Activated B cell treated with CpG ODN at 0.5 μM for 24 hours (primary cell): ENCODE measurements at regions of chr4 and their contacts with region 1.

Region 1: GRCh38 chr4:82428969-82429727 is 1.1 kb downstream of the HNRNPDL start:
- DNase-seq: peak; percentile 97
- ATAC-seq: peak; percentile 59
- H3K4me3 Mint-ChIP-seq: peak overlapping the region; percentile 100
- H3K27ac Mint-ChIP-seq: peak overlapping the region; percentile 99
- H3K4me1 Mint-ChIP-seq: peaks cover 58% of the 10 kb centered on the region
- H3K27me3 Mint-ChIP-seq: no peaks in the 10 kb centered on the region
- CTCF ChIP-seq: peak; percentile 68

Region 2: GRCh38 chr4:81421346-81422218 is 1007.6 kb before region 1 on chr4:
- CTCF ChIA-PET with region 1: no interaction called
- POLR2A ChIA-PET with region 1: interaction called, 5 read pairs
- intact Hi-C with region 1: loop called (anchors 1 kb)
- DNase-seq: no peak
- ATAC-seq: peak; percentile 99
- H3K4me3 Mint-ChIP-seq: peak overlapping the region; percentile 38
- H3K27ac Mint-ChIP-seq: peak overlapping the region; percentile 83
- H3K4me1 Mint-ChIP-seq: peaks cover 49% of the 10 kb centered on the region
- H3K27me3 Mint-ChIP-seq: no peaks in the 10 kb centered on the region
- CTCF ChIP-seq: no peak

Region 3: DNA sequence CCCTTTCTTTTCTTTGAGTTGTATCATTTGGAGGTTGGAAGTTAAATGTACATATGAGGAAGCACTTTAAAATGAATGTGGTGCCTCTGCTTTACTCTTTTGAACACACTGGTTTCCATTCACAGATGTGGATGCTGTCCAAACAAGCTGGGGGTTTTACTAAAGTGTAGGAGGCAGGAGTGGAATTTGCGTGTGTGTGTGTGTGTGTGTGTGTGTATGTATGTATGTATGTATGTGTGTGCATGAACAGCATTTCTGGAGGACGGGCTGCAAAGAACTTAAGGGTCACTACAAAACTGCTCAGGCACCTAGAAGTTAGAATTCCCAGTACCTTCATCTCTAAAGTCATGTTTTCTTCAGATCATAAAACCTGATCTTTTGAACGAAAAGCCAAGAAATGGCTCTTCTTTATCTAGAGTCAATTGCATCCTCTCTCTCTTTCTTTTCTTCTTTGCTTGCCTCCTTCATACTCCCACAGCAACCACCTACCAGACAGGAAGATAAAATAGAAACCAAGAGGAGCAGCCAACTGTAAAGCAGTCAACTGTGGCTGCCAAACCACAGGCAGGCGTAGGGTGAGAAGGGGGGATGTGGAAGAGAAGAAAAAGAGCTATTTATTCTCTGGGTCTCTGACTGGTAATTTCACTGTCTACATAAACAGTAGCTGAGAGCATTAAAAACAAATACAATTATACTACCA is 780.4 kb before region 1 on chr4:
- CTCF ChIA-PET with region 1: no interaction called
- POLR2A ChIA-PET with region 1: no interaction called
- intact Hi-C with region 1: no loop called
- DNase-seq: no peak
- ATAC-seq: peak; percentile 91
- H3K4me3 Mint-ChIP-seq: peak overlapping the region; percentile 21
- H3K27ac Mint-ChIP-seq: peak overlapping the region; percentile 1
- H3K4me1 Mint-ChIP-seq: peaks cover 46% of the 10 kb centered on the region
- H3K27me3 Mint-ChIP-seq: no peaks in the 10 kb centered on the region
- CTCF ChIP-seq: no peak

Region 4: GRCh38 chr4:82360298-82361177 is 68.6 kb before region 1 on chr4:
- CTCF ChIA-PET with region 1: interaction called, 15 read pairs
- POLR2A ChIA-PET with region 1: interaction called, 16 read pairs
- intact Hi-C with region 1: no loop called
- DNase-seq: no peak
- ATAC-seq: peak; percentile 75
- H3K4me3 Mint-ChIP-seq: no peak overlapping the region
- H3K27ac Mint-ChIP-seq: peak overlapping the region; percentile 6
- H3K4me1 Mint-ChIP-seq: peaks cover 69% of the 10 kb centered on the region
- H3K27me3 Mint-ChIP-seq: no peaks in the 10 kb centered on the region
- CTCF ChIP-seq: peak; percentile 38

Region 5: GRCh38 chr4:82462415-82462831 is 33.3 kb after region 1 on chr4:
- CTCF ChIA-PET with region 1: no interaction called
- POLR2A ChIA-PET with region 1: interaction called, 3 read pairs
- intact Hi-C with region 1: loop called (anchors 1 kb)
- DNase-seq: peak; percentile 66
- ATAC-seq: peak; percentile 99
- H3K4me3 Mint-ChIP-seq: no peak overlapping the region
- H3K27ac Mint-ChIP-seq: no peak overlapping the region
- H3K4me1 Mint-ChIP-seq: peaks cover 22% of the 10 kb centered on the region
- H3K27me3 Mint-ChIP-seq: no peaks in the 10 kb centered on the region
- CTCF ChIP-seq: no peak

Region 6: GRCh38 chr4:83012687-83013419 is 583.7 kb after region 1 on chr4:
- CTCF ChIA-PET with region 1: no interaction called
- POLR2A ChIA-PET with region 1: interaction called, 8 read pairs
- intact Hi-C with region 1: loop called (anchors 1 kb)
- DNase-seq: peak; percentile 97
- ATAC-seq: peak; percentile 92
- H3K4me3 Mint-ChIP-seq: peak overlapping the region; percentile 94
- H3K27ac Mint-ChIP-seq: peak overlapping the region; percentile 92
- H3K4me1 Mint-ChIP-seq: peaks cover 44% of the 10 kb centered on the region
- H3K27me3 Mint-ChIP-seq: no peaks in the 10 kb centered on the region
- CTCF ChIP-seq: no peak

Region 7: DNA sequence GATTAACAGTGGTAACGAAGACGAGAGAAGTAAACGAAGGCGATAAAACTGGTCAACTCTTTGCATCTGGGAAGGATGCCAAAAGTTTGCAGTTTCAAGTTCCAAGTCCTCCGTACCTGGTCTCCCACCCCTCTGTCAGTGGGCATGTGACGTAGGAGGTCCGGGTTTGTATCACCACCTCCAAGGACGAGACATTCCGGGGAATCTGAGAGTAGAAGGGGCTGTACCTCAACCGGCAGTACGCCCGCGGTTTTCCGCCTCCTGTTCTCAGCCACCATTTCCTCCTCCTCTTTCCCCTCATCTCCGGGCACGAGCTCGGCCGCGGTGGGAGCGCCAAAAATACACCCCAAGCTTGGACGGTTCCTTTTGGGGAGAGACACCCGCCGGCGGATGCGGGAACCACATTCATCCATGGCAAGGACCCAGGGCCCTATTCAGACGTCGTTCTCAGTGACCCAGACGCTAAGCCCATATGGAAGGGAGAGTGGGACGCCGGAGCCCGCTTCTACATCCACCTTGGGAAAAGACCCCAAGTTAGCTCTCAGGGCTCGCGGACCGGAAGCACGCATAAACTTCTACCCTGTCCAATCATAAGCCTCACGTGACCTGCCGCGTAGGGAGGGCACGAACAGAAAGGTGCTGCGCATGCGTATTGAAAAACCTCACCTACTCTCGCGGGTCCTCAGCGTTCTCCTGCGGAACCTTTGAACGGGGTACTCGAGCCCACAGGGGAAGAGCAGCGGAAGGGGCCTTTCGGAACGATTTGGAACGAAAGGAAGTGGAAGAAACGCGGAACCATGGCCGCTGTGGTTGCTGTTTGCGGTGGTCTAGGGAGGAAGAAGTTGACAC is 1026.4 kb after region 1 on chr4 and contains the starts of genes HELQ and MRPS18C:
- CTCF ChIA-PET with region 1: no interaction called
- POLR2A ChIA-PET with region 1: no interaction called
- intact Hi-C with region 1: loop called (anchors 1 kb)
- DNase-seq: peak; percentile 82
- ATAC-seq: peak; percentile 92
- H3K4me3 Mint-ChIP-seq: peak within 1 kb of the TSS; percentile 99
- H3K27ac Mint-ChIP-seq: peak within 1 kb of the TSS; percentile 99
- H3K4me1 Mint-ChIP-seq: peaks cover 55% of the 10 kb centered on the region
- H3K27me3 Mint-ChIP-seq: no peaks in the 10 kb centered on the region
- CTCF ChIP-seq: no peak
- total RNA-seq, gene HELQ: 31.9 and 32.9 TPM in 2 replicates
- total RNA-seq, gene MRPS18C: 56.0 and 56.5 TPM in 2 replicates